Tibial artery (tissue), 4 donors: ENCODE measurements at regions of chr15 and their contacts with region 1.

Region 1: DNA sequence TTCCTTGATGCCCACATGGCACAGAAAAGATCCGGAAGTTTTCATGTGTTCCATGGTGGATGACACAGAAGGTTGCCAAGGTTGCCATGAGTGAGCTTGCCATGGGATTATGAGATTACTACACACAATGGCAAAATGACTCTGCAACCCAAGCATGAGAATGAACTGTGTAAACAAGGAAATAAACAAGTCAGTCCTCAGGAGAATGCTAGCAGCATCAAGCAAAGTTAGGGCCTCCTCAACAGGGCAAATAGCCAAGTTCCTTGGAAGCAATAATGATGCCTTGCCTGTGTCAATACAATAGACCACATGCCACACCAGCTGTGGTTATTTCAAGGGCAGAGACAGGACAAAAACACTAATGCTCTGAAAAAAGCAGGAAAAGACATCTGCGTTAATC is 41.8 kb downstream of the AQR start:
- DNase-seq: no peak
- H3K4me3 ChIP-seq: no peak overlapping the region
- H3K27ac ChIP-seq: no peak overlapping the region
- H3K4me1 ChIP-seq: no peaks in the 10 kb centered on the region
- H3K27me3 ChIP-seq: no peaks in the 10 kb centered on the region
- CTCF ChIP-seq: no peak

Region 2: GRCh38 chr15:34621675-34622074 is 306.1 kb before region 1 on chr15:
- intact Hi-C with region 1: loop called (anchors 5 kb)
- DNase-seq: no peak
- H3K4me3 ChIP-seq: no peak overlapping the region
- H3K27ac ChIP-seq: no peak overlapping the region
- H3K4me1 ChIP-seq: no peaks in the 10 kb centered on the region
- H3K27me3 ChIP-seq: no peaks in the 10 kb centered on the region
- CTCF ChIP-seq: peak in 1 of 2 experiments; percentile 25

Region 3: GRCh38 chr15:35545824-35546510 is 618.2 kb after region 1 on chr15 and contains the start of gene DPH6:
- intact Hi-C with region 1: no loop called
- DNase-seq: peak; percentile 79 to 91
- H3K4me3 ChIP-seq: peak within 1 kb of the TSS; percentile 70 to 71
- H3K27ac ChIP-seq: peak within 1 kb of the TSS; percentile 95 to 98
- H3K4me1 ChIP-seq: peaks cover 0 to 30% (median 14%) of the 10 kb centered on the region in 4 donors
- H3K27me3 ChIP-seq: no peaks in the 10 kb centered on the region
- CTCF ChIP-seq: peak in 1 of 2 experiments; percentile 3